ENCODE measurements at regions of chr22 and their contacts with region 1.

Region 1: DNA sequence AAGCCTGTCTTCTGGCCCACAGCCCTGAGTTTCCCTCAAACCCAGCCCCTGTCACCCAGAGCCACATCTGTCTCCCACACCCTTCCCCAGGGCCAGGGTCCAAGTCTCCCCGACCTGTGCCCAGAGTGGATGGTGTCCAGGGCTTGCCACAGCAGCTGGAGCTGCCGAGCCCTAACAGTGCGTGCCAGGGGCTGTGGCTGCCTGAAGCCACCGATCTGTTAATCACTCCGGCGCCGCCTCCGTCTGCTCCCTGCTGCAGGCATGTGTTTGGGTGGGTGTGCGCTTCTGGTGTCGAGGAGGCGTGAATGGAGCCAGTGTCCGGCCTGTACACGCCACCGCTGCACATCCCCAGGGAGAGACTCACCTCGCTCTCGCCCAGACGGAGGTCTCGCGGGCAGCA is 26.1 kb downstream of the SHISAL1 start:
- DNase-seq: peak in 2 of 5 donors; percentile 38 to 52
- ATAC-seq: peak in 2 of 4 donors; percentile 30 to 41
- H3K4me3 ChIP-seq: no peak overlapping the region
- H3K27ac ChIP-seq: no peak overlapping the region
- H3K4me1 ChIP-seq: no peaks in the 10 kb centered on the region
- H3K27me3 ChIP-seq: peaks cover 0 to 8% (median 0%) of the 10 kb centered on the region in 9 donors
- CTCF ChIP-seq: no peak
- POLR2A ChIP-seq: no peak

Region 2: GRCh38 chr22:44204739-44205515 is 81.7 kb before region 1 on chr22:
- intact Hi-C with region 1: loop called in 1 of 10 experiments (anchors 1 kb)
- DNase-seq: peak in 1 of 5 donors; percentile 12
- ATAC-seq: no peak
- H3K4me3 ChIP-seq: no peak overlapping the region
- H3K27ac ChIP-seq: no peak overlapping the region
- H3K4me1 ChIP-seq: peaks cover 0 to 13% (median 0%) of the 10 kb centered on the region in 12 donors
- H3K27me3 ChIP-seq: peaks cover 0 to 5% (median 0%) of the 10 kb centered on the region in 9 donors
- CTCF ChIP-seq: no peak
- POLR2A ChIP-seq: no peak

Measured in heart left ventricle (tissue), 16 donors.